ENCODE measurements at regions of chr6 and their contacts with region 1.

Region 1: DNA sequence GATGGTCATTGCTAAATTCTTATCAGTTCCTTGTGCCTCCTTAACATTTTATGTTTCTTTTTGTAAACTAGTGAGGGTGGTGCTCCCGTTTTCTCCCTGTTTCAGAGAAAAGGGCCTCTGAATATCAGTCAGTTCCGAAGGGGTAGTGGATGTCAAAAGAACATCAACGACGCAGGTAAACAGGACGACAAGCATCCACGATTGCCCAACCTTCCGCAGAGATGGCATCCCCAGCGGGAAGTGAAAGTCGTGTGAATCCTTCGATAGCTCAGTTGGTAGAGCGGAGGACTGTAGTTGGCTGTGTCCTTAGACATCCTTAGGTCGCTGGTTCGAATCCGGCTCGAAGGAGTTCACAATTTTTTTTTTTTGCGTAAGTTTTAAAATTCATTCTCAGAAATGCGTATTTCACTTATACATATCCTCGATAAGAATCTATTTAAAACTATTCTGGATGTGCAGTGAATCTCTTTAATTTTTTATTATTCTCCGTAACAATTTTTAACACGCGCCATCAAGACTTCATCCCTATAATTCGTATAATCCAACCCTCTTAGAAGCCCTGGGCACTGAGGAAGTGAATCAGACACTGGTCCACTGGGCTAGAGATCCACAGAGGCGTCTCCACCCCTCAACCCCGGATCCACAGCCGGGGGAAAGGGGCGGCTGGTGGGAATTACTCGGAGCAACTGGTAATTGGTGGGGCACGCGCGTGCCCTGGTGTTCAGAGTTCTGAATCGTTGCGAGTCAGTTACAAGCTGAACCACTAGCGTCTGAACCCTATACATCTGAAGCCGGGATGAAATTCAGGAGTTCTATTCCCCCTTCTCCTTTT is 27.9 kb upstream of the ABT1 start:
- DNase-seq: peak; percentile 92 to 95 (median 93)
- H3K4me3 ChIP-seq: peak overlapping the region; percentile 52 to 82 (median 79)
- H3K4me3 Mint-ChIP-seq: peak overlapping the region; percentile 91 to 97
- H3K27ac ChIP-seq: peak overlapping the region in 1 of 2 donors; percentile 9
- H3K27ac Mint-ChIP-seq: peak overlapping the region; percentile 59 to 84 (median 81)
- H3K4me1 ChIP-seq: peaks cover 17 to 23% of the 10 kb centered on the region in 2 donors
- H3K4me1 Mint-ChIP-seq: peaks cover 29% of the 10 kb centered on the region
- H3K27me3 ChIP-seq: no peaks in the 10 kb centered on the region
- H3K27me3 Mint-ChIP-seq: peaks cover 0 to 21% (median 3%) of the 10 kb centered on the region in 3 donors
- CTCF ChIP-seq: no peak

Region 2: GRCh38 chr6:26175428-26176181 is 393.2 kb before region 1 on chr6:
- intact Hi-C with region 1: loop called in 1 of 2 experiments (anchors 10 kb)
- DNase-seq: peak; percentile 57 to 72 (median 71)
- H3K4me3 ChIP-seq: no peak overlapping the region
- H3K4me3 Mint-ChIP-seq: no peak overlapping the region
- H3K27ac ChIP-seq: no peak overlapping the region
- H3K27ac Mint-ChIP-seq: peak overlapping the region in 1 of 7 donors; percentile 66
- H3K4me1 ChIP-seq: peaks cover 19 to 20% of the 10 kb centered on the region in 2 donors
- H3K4me1 Mint-ChIP-seq: peaks cover 22% of the 10 kb centered on the region
- H3K27me3 ChIP-seq: no peaks in the 10 kb centered on the region
- H3K27me3 Mint-ChIP-seq: peaks cover 0 to 1% (median 0%) of the 10 kb centered on the region in 3 donors
- CTCF ChIP-seq: peak; percentile 86

Region 3: GRCh38 chr6:26366504-26366903 is 202.3 kb before region 1 on chr6:
- intact Hi-C with region 1: no loop called
- DNase-seq: no peak
- H3K4me3 ChIP-seq: peak overlapping the region in 1 of 3 experiments; percentile 86
- H3K4me3 Mint-ChIP-seq: peak overlapping the region; percentile 37 to 84
- H3K27ac ChIP-seq: peak overlapping the region; percentile 50 to 61
- H3K27ac Mint-ChIP-seq: peak overlapping the region; percentile 50 to 91 (median 78)
- H3K4me1 ChIP-seq: peaks cover 46 to 54% of the 10 kb centered on the region in 2 donors
- H3K4me1 Mint-ChIP-seq: peaks cover 43% of the 10 kb centered on the region
- H3K27me3 ChIP-seq: no peaks in the 10 kb centered on the region
- H3K27me3 Mint-ChIP-seq: peaks cover 0 to under 1% (median 0%) of the 10 kb centered on the region in 3 donors
- CTCF ChIP-seq: no peak

Region 4: DNA sequence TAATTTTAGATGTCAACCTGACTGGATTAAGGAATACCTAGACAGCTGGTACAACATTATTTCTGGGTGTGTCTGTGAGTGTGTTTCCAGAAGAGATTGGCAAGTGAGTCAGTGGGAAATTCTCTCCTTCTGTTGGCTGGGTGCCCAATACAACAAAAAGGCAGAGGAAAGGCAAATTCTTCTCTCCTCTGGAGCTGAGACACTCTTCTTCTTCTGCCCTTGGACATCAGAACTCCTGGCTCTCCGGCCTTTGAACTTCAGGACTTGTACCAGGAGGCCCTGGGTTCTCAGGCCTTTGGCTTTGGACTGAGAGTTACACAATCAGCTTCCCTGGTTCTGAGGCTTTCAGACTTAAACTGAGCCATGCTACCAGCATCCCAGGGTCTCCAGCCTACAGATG is 174.5 kb before region 1 on chr6:
- intact Hi-C with region 1: no loop called
- DNase-seq: peak in 1 of 3 donors; percentile 28
- H3K4me3 ChIP-seq: no peak overlapping the region
- H3K4me3 Mint-ChIP-seq: no peak overlapping the region
- H3K27ac ChIP-seq: no peak overlapping the region
- H3K27ac Mint-ChIP-seq: no peak overlapping the region
- H3K4me1 ChIP-seq: peaks cover 28 to 30% of the 10 kb centered on the region in 2 donors
- H3K4me1 Mint-ChIP-seq: peaks cover 42% of the 10 kb centered on the region
- H3K27me3 ChIP-seq: no peaks in the 10 kb centered on the region
- H3K27me3 Mint-ChIP-seq: peaks cover 0 to 2% (median 1%) of the 10 kb centered on the region in 3 donors
- CTCF ChIP-seq: no peak

Region 5: DNA sequence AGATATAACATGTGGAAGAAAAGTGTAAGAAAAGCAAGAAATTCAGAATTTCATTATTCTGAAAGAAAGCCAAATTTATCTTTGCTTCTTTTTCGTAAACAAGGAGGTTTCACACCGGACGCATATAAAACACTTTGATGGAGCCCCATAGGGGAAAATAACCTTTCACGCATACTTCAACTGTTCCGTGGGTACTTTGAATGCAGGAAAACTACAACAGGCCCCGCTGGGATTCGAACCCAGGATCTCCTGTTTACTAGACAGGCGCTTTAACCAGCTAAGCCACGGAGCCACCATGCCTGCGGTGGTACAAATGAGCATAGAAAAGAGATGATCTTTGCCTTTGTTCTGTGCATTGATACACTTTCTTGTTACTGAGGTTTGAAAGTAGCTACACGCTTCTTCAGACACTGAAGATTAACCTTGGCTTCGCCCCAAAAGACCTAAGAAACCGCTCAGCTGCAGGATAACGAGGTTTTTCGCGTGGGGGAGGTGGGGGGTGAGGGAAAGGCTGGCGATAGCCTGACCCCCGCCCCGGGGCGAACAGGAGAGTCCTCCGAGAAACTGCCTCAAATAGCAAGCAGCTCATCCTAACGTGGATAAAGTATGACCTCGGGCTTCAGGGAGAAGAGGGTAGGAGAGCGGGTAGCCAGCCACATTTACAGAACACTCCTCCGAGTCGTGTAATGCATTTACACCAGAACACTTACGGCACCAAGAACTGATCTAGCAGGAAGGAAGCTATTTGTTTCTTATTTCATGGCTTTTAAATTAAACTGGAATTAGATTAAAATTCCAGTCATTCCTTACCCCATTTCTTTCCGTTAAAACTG is 35.9 kb before region 1 on chr6:
- intact Hi-C with region 1: loop called in 1 of 2 experiments (anchors 5 kb)
- DNase-seq: peak; percentile 81 to 95 (median 83)
- H3K4me3 ChIP-seq: peak overlapping the region; percentile 49 to 80 (median 60)
- H3K4me3 Mint-ChIP-seq: peak overlapping the region; percentile 97
- H3K27ac ChIP-seq: peak overlapping the region; percentile 13 to 28
- H3K27ac Mint-ChIP-seq: peak overlapping the region; percentile 57 to 87 (median 77)
- H3K4me1 ChIP-seq: peaks cover 15 to 40% of the 10 kb centered on the region in 2 donors
- H3K4me1 Mint-ChIP-seq: peaks cover 34% of the 10 kb centered on the region
- H3K27me3 ChIP-seq: no peaks in the 10 kb centered on the region
- H3K27me3 Mint-ChIP-seq: peaks cover 2 to 3% (median 3%) of the 10 kb centered on the region in 3 donors
- CTCF ChIP-seq: no peak

Region 6: DNA sequence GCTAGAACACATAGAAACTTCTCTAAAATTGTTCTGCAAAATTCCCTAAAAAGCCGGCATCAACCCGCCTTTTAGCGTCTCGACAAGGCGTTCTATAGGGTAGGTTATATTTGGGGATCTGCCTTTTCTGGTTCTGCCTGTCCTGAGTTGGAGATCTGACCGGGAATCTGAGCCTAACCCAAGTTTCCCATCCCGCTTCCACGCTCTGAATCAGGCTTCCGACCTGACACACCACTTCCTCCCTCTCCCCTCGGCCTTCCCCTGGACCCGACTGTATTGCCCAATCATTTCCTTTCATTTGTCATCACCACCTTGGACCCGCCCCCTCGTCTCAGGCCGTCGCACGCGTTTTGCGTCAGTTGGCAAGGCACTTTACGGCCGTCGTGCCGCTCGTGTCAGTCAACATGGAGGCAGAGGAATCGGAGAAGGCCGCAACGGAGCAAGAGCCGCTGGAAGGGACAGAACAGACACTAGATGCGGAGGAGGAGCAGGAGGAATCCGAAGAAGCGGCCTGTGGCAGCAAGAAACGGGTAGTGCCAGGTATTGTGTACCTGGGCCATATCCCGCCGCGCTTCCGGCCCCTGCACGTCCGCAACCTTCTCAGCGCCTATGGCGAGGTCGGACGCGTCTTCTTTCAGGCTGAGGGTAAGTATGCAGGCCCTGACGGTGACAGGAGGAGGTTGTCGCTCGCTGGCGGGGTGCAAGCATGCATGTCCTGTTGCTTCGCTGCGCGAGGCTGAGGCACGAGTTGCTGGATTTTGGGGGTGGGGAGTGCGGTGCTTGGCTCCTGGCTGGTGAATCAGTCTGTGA is 28.0 kb after region 1 on chr6 and contains the start of gene ABT1:
- intact Hi-C with region 1: loop called in 1 of 2 experiments (anchors 1 kb)
- DNase-seq: peak; percentile 96 to 99 (median 99)
- H3K4me3 ChIP-seq: peak within 1 kb of the TSS; percentile 83 to 94 (median 90)
- H3K4me3 Mint-ChIP-seq: no peak within 1 kb of the TSS
- H3K27ac ChIP-seq: peak within 1 kb of the TSS; percentile 82 to 95
- H3K27ac Mint-ChIP-seq: peak within 1 kb of the TSS in 1 of 7 donors; percentile 65
- H3K4me1 ChIP-seq: peaks cover 17 to 39% of the 10 kb centered on the region in 2 donors
- H3K4me1 Mint-ChIP-seq: peaks cover 26% of the 10 kb centered on the region
- H3K27me3 ChIP-seq: peaks cover 19 to 31% of the 10 kb centered on the region in 2 donors
- H3K27me3 Mint-ChIP-seq: peaks cover 19 to 22% (median 19%) of the 10 kb centered on the region in 3 donors
- CTCF ChIP-seq: no peak
- polyA plus RNA-seq, gene ABT1: 11.6 to 40.6 (median 31.7) TPM